ENCODE measurements at regions of chr4 and their contacts with region 1.

Region 1: GRCh38 chr4:12734586-12734985 is 749.6 kb downstream of the RAB28 start:
- DNase-seq: no peak
- H3K4me3 ChIP-seq: no peak overlapping the region
- H3K27ac ChIP-seq: no peak overlapping the region
- H3K4me1 ChIP-seq: no peaks in the 10 kb centered on the region
- H3K27me3 ChIP-seq: no peaks in the 10 kb centered on the region
- CTCF ChIP-seq: no peak

Region 2: DNA sequence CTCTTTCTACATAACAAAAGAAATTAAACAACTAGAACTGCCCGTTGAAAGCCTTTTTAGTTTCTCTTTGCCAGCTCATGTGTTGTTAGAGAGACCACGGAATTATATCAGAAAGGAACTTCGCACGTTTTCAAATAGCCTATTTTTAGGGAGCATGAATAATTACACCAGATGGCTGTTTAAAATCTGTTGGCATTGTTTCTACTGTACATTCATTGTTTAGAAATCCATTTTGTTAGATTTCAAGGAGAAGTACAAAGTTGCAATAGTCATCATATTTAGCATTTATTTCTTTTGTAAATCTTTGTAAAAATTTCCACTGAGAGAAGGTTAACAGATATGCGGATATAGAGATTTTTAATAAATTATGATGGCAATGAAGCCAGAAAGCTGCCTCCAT is 902.8 kb before region 1 on chr4:
- CTCF ChIA-PET with region 1: no interaction called
- POLR2A ChIA-PET with region 1: no interaction called
- intact Hi-C with region 1: no loop called
- DNase-seq: no peak
- H3K4me3 ChIP-seq: no peak overlapping the region
- H3K27ac ChIP-seq: no peak overlapping the region
- H3K4me1 ChIP-seq: no peaks in the 10 kb centered on the region
- H3K27me3 ChIP-seq: no peaks in the 10 kb centered on the region
- CTCF ChIP-seq: no peak

Region 3: GRCh38 chr4:12846368-12846767 is 111.8 kb after region 1 on chr4:
- CTCF ChIA-PET with region 1: no interaction called
- POLR2A ChIA-PET with region 1: no interaction called
- intact Hi-C with region 1: loop called (anchors 5 kb)
- DNase-seq: no peak
- H3K4me3 ChIP-seq: no peak overlapping the region
- H3K27ac ChIP-seq: no peak overlapping the region
- H3K4me1 ChIP-seq: no peaks in the 10 kb centered on the region
- H3K27me3 ChIP-seq: no peaks in the 10 kb centered on the region
- CTCF ChIP-seq: no peak